ENCODE measurements at regions of chr4 and their contacts with region 1.

Region 1: DNA sequence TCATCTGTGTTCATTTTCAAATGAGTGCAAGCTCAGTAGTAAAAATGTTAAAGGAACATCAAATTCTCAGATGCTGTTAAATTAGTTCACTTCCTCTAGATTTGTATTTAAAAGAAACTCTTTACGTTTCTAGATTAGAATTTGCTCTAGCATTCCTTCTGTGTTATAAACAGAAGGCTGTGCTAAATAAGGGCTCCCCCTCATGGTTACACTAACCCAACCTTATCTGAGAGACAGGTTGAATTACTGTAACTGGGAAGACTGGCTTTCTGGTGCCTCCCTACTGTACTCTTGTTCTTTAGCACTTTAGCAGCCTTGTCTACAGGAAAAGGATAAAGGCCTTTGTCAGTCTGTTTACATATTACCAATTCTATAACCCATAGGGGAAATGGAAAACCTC is 56.8 kb downstream of the RXFP1 start:
- DNase-seq: peak; percentile 59
- ATAC-seq: peak; percentile 97
- H3K4me3 ChIP-seq: no peak overlapping the region
- H3K27ac ChIP-seq: no peak overlapping the region
- H3K4me1 ChIP-seq: peaks cover 4% of the 10 kb centered on the region; the same call in 1 of the 2 replicates
- H3K27me3 ChIP-seq: no peaks in the 10 kb centered on the region
- CTCF ChIP-seq: peak; percentile 70

Region 2: DNA sequence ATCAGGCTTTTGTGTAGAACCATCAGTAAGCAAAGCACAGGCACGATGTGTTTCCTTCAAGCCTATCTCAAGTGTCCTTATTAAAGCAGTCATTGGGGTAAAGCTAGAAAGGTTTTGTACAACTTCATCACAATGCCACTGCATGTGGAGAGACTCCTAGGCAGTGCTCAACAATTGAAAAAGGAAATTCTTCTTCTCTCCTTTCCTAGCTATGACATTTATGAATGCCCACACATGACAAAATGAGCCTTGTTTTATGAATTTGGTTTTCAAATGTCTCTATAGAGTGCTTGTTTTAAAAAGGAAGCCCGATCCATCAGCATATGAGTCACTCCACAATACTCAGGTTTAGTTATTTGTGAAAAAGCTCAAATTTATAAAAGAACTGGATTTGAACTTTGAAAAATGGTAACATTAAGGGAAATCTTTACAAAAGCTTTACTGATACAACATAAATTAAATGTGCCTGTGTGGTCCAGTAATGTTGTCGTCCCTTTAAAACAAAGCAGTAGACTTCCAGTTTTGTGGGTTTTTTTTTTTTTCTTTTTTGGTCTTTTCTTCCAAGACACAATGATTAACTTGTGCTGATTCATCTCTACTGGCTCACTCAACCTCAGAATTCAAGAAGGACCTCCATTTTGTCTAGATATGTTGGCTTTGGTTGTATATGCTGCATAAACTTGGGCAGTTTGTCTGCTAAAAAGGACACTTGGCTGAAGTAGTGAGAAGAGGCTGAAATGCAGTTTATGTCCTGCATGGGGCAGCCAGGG is 679.5 kb before region 1 on chr4:
- CTCF ChIA-PET with region 1: no interaction called
- POLR2A ChIA-PET with region 1: no interaction called
- intact Hi-C with region 1: no loop called
- DNase-seq: no peak
- ATAC-seq: no peak
- H3K4me3 ChIP-seq: no peak overlapping the region
- H3K27ac ChIP-seq: no peak overlapping the region
- H3K4me1 ChIP-seq: no peaks in the 10 kb centered on the region
- H3K27me3 ChIP-seq: no peaks in the 10 kb centered on the region
- CTCF ChIP-seq: no peak

Region 3: DNA sequence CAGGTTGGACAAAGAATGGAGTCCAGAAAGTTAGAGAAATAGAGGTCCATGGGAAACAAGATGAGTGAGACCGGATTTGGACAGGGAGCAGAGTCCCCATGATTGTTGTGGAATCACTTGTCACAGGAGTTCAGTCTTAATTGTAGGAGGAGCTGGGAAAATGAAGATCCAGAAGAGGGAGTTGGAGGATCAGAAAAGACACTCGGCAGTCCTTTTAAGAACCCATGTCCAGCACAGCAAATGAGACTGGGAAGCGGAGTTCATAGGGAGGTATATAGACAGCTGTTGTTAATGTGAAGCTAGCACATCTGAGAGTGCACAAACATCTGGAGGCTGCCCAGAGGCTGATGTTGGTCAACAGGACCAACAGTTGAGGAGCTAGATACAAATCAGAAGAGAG is 168.2 kb before region 1 on chr4:
- CTCF ChIA-PET with region 1: interaction called, 6 read pairs
- POLR2A ChIA-PET with region 1: no interaction called
- intact Hi-C with region 1: loop called (anchors 1 kb)
- DNase-seq: peak; percentile 45
- ATAC-seq: peak; percentile 75
- H3K4me3 ChIP-seq: no peak overlapping the region
- H3K27ac ChIP-seq: no peak overlapping the region
- H3K4me1 ChIP-seq: no peaks in the 10 kb centered on the region
- H3K27me3 ChIP-seq: no peaks in the 10 kb centered on the region
- CTCF ChIP-seq: peak; percentile 41; the same call in 1 of the 2 replicates

Region 4: DNA sequence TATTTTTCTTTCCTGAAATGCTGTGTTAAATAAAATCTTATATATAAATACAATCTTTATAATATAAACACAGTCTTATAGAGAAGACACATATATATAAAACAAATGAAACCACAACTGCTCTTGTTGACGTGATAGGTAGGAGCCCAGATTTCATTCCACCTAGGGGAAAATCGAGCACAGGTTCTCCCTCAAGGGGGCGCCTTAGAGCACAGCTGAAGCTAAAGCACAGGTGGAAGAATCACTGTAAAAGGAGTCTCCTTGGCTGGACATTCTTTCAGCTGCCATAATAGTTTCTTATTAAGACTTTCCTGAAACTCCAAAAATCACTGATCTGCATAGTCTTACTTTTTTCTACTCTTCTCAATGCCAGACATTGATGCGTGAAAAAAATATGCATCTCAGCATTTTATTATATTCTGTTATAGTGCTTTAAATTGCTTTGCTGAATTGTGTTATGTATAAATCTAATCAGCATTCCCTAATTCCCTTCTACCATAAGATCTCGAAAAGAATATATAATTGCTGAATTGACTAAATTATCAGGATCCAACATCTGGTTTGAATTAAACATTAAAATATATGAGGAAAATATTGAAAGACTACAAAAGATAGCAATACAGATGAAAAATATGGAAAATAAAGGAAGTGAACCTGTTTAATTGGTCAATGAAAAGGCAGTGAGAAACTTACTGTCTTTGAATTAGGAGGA is 82.3 kb before region 1 on chr4:
- CTCF ChIA-PET with region 1: interaction called, 5 read pairs
- POLR2A ChIA-PET with region 1: no interaction called
- intact Hi-C with region 1: loop called (anchors 10 kb)
- DNase-seq: peak; percentile 58
- ATAC-seq: no peak
- H3K4me3 ChIP-seq: no peak overlapping the region
- H3K27ac ChIP-seq: no peak overlapping the region
- H3K4me1 ChIP-seq: no peaks in the 10 kb centered on the region
- H3K27me3 ChIP-seq: no peaks in the 10 kb centered on the region
- CTCF ChIP-seq: peak; percentile 62

Region 5: DNA sequence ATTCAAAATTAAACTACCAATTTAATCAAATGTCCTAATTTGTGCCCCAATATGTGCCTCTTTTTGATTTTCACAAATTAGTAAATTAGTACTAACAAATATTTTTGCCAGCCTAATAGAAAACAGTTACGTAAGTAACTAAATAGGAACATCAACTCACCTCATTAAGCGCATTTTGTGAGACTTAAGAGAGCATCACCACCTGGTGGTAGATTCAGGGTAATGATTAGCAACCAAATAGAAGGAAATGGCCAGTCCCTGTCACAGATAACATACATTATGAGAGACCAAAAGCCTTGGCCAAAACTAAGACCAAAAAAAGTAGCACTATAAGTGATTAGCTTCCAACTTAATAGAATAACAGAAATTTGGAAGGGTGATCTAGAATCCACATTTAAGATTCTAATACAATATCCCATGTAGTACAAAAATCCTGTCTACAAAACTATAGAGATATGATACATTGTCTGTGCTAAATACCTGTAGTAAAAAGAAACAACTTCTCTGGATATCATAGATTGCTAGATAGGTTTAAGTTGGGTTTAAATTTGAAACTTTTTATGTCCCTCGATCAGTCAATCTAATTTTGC is 46.5 kb after region 1 on chr4:
- CTCF ChIA-PET with region 1: no interaction called
- POLR2A ChIA-PET with region 1: no interaction called
- intact Hi-C with region 1: loop called (anchors 1 kb)
- DNase-seq: peak; percentile 75
- ATAC-seq: peak; percentile 63
- H3K4me3 ChIP-seq: no peak overlapping the region
- H3K27ac ChIP-seq: no peak overlapping the region
- H3K4me1 ChIP-seq: 0 out of 2 replicates have a peak, but pooled peaks cover 3% of the 10 kb centered on the region
- H3K27me3 ChIP-seq: no peaks in the 10 kb centered on the region
- CTCF ChIP-seq: peak; percentile 83

Measured in PC-3 (cell line).